Activated T-helper 2 cell treated with anti-CD3 and anti-CD28 coated beads, Interferon-gamma antibody, Interleukin-2, Interleukin-4, amounts not matched to agents 10 μg/mL and 5 μg/mL and 100 μg/mL, durations not matched to agents 14 hours and 24 hours and 36 hours (primary cell): ENCODE measurements at regions of chr11 and their contacts with region 1.

Region 1: GRCh38 chr11:78574386-78575381 is at the start of gene NARS2:
- DNase-seq: peak; percentile 95
- H3K4me3 Mint-ChIP-seq: peak within 1 kb of the TSS; percentile 93
- H3K27ac Mint-ChIP-seq: peak within 1 kb of the TSS; percentile 93
- H3K4me1 Mint-ChIP-seq: peaks cover 31% of the 10 kb centered on the region
- H3K27me3 Mint-ChIP-seq: peaks cover 3% of the 10 kb centered on the region
- total RNA-seq, gene NARS2: 34.1 and 37.7 TPM in 2 replicates

Region 2: DNA sequence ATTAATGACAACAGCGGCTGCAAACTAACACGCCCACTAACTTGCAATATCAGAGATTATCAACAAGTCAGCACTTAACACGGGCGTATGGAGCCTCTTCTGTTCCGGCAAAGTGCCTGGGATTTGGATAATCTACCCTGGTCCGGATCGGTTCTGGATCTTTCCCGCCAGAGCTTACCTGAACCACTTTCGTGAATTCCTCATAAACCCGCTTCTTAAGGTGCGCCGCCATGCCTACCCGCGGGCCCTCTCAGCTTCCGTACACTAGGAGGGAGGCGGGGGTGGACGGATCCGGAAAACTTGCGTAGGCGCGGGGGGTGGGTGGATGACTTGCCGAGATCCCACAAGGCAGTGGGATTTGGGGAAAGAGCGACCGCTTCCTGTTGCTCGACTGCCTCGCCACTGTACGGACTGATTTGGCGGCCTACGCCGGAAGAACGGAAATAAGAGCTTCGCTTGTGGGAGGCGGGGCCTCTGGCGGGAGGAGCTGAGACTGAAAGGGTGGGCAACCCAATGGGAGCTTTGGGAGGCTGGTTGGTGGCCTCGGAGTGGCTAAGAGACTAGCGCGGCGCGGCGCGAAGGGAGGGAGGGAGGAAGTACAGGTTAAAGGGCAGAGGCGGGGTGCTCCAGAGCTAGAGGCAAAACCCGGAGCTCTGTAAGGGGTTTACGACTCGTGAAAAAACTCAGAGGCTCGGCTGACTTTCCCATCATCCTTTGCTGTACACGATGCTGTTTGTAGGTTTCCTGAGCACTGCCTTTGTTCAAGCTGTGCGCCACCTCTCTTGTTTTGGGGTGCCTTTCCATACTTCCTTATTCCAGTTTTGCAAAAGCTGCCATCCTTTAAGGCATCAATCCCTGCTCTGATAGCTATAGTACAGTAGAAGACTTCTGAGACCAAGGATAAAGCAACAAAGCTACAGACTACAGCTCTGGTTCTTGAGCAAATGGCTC is 580.0 kb before region 1 on chr11 and contains the start of gene INTS4:
- intact Hi-C with region 1: loop called (anchors 2 kb)
- DNase-seq: peak; percentile 99
- H3K4me3 Mint-ChIP-seq: peak within 1 kb of the TSS; percentile 91
- H3K27ac Mint-ChIP-seq: peak within 1 kb of the TSS; percentile 76
- H3K4me1 Mint-ChIP-seq: peaks cover 15% of the 10 kb centered on the region
- H3K27me3 Mint-ChIP-seq: no peaks in the 10 kb centered on the region
- total RNA-seq, gene INTS4: 62.7 and 66.8 TPM in 2 replicates

Region 3: GRCh38 chr11:78542007-78542406 is 32.7 kb before region 1 on chr11:
- intact Hi-C with region 1: no loop called
- DNase-seq: no peak
- H3K4me3 Mint-ChIP-seq: no peak overlapping the region
- H3K27ac Mint-ChIP-seq: no peak overlapping the region
- H3K4me1 Mint-ChIP-seq: peaks cover 12% of the 10 kb centered on the region
- H3K27me3 Mint-ChIP-seq: no peaks in the 10 kb centered on the region

Region 4: GRCh38 chr11:78651923-78652842 is 77.5 kb after region 1 on chr11:
- intact Hi-C with region 1: loop called (anchors 2 kb)
- DNase-seq: no peak
- H3K4me3 Mint-ChIP-seq: peak overlapping the region; percentile 63
- H3K27ac Mint-ChIP-seq: peak overlapping the region; percentile 94
- H3K4me1 Mint-ChIP-seq: peaks cover 40% of the 10 kb centered on the region
- H3K27me3 Mint-ChIP-seq: no peaks in the 10 kb centered on the region